Aorta (tissue), 5 donors: ENCODE measurements at regions of chr4 and their contacts with region 1.

Region 1: DNA sequence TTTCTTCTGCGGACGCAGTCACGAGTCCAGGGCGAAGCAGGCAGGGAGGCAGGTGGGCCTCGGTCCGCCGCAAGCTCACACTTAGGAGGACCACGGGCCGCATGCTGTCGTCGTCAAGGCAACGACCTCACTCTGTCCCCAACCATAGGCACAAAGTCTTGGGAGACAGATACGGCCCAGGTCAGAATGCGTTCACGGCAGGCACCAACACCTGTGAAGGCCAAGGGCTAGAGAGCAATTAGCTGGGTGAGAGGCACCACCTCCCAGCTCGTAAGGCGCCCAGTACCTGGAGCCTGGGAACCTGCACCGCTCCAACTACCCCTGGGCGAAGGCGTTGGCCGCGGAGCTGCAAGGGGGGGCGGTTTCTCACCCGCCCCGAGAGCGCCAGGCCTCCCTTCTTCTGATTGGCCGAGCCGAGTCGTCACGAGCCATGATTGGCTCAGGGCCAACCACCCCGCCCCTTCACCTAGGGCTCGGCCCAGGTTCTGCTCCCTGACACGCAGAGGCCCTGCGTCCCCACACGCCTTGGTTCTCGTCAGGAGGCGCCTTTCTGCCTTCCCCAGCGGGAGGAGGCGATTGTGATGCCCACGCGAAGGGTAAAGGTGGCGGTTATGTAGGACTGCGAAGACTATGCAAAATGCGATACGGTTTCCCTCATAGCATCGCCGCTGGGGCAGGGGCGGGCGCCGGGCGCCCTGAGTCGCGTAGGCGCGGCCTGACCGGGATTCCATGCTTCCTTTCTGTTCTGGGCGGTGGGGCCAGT is at the start of gene CDKL2:
- DNase-seq: peak; percentile 89 to 95
- ATAC-seq: peak; percentile 94
- H3K4me3 ChIP-seq: peak within 1 kb of the TSS; percentile 24 to 59
- H3K27ac ChIP-seq: no peak within 1 kb of the TSS
- H3K4me1 ChIP-seq: peaks cover 0 to 2% of the 10 kb centered on the region in 2 donors
- H3K27me3 ChIP-seq: no peaks in the 10 kb centered on the region
- total RNA-seq, gene CDKL2: 2.3 to 2.8 TPM

Region 2: GRCh38 chr4:75673027-75673958 is 42.9 kb after region 1 on chr4 and contains the start of gene G3BP2:
- intact Hi-C with region 1: loop called in 1 of 2 experiments (anchors 2 kb)
- DNase-seq: peak; percentile 99
- ATAC-seq: peak; percentile 99
- H3K4me3 ChIP-seq: peak within 1 kb of the TSS; percentile 63 to 82
- H3K27ac ChIP-seq: peak within 1 kb of the TSS; percentile 45 to 85
- H3K4me1 ChIP-seq: peaks cover 0 to 8% of the 10 kb centered on the region in 2 donors
- H3K27me3 ChIP-seq: no peaks in the 10 kb centered on the region
- total RNA-seq, gene G3BP2: 99.6 to 99.7 TPM

Region 3: DNA sequence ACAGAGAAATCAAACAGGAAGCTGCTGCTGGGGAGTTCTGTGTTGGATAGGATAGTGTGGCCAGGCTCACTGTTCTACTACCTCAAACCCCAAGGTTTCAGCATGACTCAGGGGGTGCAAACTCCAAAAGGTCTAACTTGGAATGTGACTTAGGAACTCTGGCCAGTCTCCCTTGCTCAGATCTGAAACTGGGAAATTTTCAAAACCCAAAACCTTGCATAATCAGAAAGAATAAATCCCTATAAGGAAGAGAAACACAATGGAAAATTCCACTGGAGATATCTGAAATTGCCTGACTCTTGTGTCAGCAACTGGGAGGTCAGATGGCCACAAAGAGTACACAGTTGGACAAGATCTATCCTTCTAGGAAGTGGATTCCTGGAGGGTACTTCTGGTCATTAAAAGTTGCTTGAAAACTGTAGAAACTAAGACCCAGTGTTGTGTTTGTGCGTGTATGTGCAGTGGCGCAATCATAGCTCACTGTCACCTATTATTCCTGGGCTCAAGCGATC is 213.9 kb after region 1 on chr4:
- intact Hi-C with region 1: loop called in 1 of 2 experiments (anchors 10 kb)
- DNase-seq: no peak
- ATAC-seq: peak; percentile 70
- H3K4me3 ChIP-seq: no peak overlapping the region
- H3K27ac ChIP-seq: no peak overlapping the region
- H3K4me1 ChIP-seq: no peaks in the 10 kb centered on the region
- H3K27me3 ChIP-seq: no peaks in the 10 kb centered on the region

Region 4: GRCh38 chr4:75858721-75859120 is 228.4 kb after region 1 on chr4:
- intact Hi-C with region 1: no loop called
- DNase-seq: no peak
- ATAC-seq: no peak
- H3K4me3 ChIP-seq: no peak overlapping the region
- H3K27ac ChIP-seq: no peak overlapping the region
- H3K4me1 ChIP-seq: no peaks in the 10 kb centered on the region
- H3K27me3 ChIP-seq: no peaks in the 10 kb centered on the region

Region 5: GRCh38 chr4:75995727-75996126 is 365.4 kb after region 1 on chr4:
- intact Hi-C with region 1: no loop called
- DNase-seq: no peak
- ATAC-seq: no peak
- H3K4me3 ChIP-seq: no peak overlapping the region
- H3K27ac ChIP-seq: no peak overlapping the region
- H3K4me1 ChIP-seq: no peaks in the 10 kb centered on the region
- H3K27me3 ChIP-seq: no peaks in the 10 kb centered on the region